Ovary (tissue), 10 donors: ENCODE measurements at regions of chr3 and their contacts with region 1.

Region 1: GRCh38 chr3:184632551-184633236 is 71.1 kb downstream of the EPHB3 start:
- DNase-seq: no peak
- H3K4me3 ChIP-seq: no peak overlapping the region
- H3K27ac ChIP-seq: no peak overlapping the region
- H3K4me1 ChIP-seq: no peaks in the 10 kb centered on the region
- H3K27me3 ChIP-seq: no peaks in the 10 kb centered on the region
- CTCF ChIP-seq: no peak
- EP300 ChIP-seq: no peak
- POLR2A ChIP-seq: no peak

Region 2: GRCh38 chr3:184334470-184335158 is 298.1 kb before region 1 on chr3:
- intact Hi-C with region 1: no loop called
- DNase-seq: no peak
- H3K4me3 ChIP-seq: no peak overlapping the region
- H3K27ac ChIP-seq: peak overlapping the region; percentile 93 to 95
- H3K4me1 ChIP-seq: peaks cover 20% of the 10 kb centered on the region
- H3K27me3 ChIP-seq: no peaks in the 10 kb centered on the region
- CTCF ChIP-seq: no peak
- EP300 ChIP-seq: no peak
- POLR2A ChIP-seq: no peak

Region 3: GRCh38 chr3:184615396-184615795 is 17.3 kb before region 1 on chr3:
- intact Hi-C with region 1: loop called in 1 of 4 experiments (anchors 1 kb)
- DNase-seq: no peak
- H3K4me3 ChIP-seq: no peak overlapping the region
- H3K27ac ChIP-seq: no peak overlapping the region
- H3K4me1 ChIP-seq: peaks cover 4% of the 10 kb centered on the region
- H3K27me3 ChIP-seq: no peaks in the 10 kb centered on the region
- CTCF ChIP-seq: no peak
- EP300 ChIP-seq: no peak
- POLR2A ChIP-seq: no peak

Region 4: GRCh38 chr3:186035277-186035676 is 1402.6 kb after region 1 on chr3:
- intact Hi-C with region 1: loop called in 1 of 4 experiments (anchors 5 kb)
- DNase-seq: no peak
- H3K4me3 ChIP-seq: no peak overlapping the region
- H3K27ac ChIP-seq: no peak overlapping the region
- H3K4me1 ChIP-seq: no peaks in the 10 kb centered on the region
- H3K27me3 ChIP-seq: no peaks in the 10 kb centered on the region
- CTCF ChIP-seq: no peak
- EP300 ChIP-seq: no peak
- POLR2A ChIP-seq: no peak